ENCODE measurements at regions of chr2 and their contacts with region 1.

Region 1: DNA sequence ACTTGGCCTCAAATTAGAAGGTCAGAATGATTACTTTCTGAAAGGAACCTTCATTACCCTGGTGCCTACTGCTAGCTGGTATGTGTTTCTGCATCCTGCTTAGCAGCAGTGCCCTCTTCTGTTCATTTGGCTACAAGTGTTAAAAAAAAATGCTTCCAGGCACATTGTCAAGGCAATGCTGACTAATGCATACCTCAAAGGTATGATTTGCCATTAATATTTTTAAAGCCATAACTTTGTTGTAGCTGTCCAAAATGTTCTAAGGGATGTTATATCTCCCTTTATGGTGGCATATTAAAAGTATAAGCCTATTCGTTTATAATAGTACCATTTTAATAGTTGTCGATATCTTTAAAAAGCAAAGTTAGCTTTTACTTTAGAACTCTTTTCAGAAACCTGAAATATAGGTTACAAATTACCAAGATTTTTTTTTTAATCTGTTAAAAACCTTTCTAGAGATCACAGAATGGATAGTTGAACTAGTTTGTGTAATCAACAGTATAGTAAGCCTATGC is 52.0 kb upstream of the FAM171B start:
- DNase-seq: peak in 1 of 2 donors; percentile 67
- ATAC-seq: peak; percentile 52 to 72 (median 64)
- H3K4me3 ChIP-seq: no peak overlapping the region
- H3K4me3 Mint-ChIP-seq: no peak overlapping the region
- H3K27ac ChIP-seq: no peak overlapping the region
- H3K27ac Mint-ChIP-seq: no peak overlapping the region
- H3K4me1 ChIP-seq: no peaks in the 10 kb centered on the region
- H3K4me1 Mint-ChIP-seq: peaks cover 0 to 4% of the 10 kb centered on the region in 2 donors
- H3K27me3 ChIP-seq: no peaks in the 10 kb centered on the region
- H3K27me3 Mint-ChIP-seq: no peaks in the 10 kb centered on the region
- CTCF ChIP-seq: peak; percentile 57

Region 2: GRCh38 chr2:186503848-186504606 is 137.8 kb before region 1 on chr2:
- intact Hi-C with region 1: loop called (anchors 1 kb)
- DNase-seq: peak in 1 of 2 donors; percentile 47
- ATAC-seq: peak; percentile 53 to 69 (median 57)
- H3K4me3 ChIP-seq: no peak overlapping the region
- H3K4me3 Mint-ChIP-seq: no peak overlapping the region
- H3K27ac ChIP-seq: no peak overlapping the region
- H3K27ac Mint-ChIP-seq: peak overlapping the region; percentile 11 to 17
- H3K4me1 ChIP-seq: no peaks in the 10 kb centered on the region
- H3K4me1 Mint-ChIP-seq: peaks cover 15 to 16% of the 10 kb centered on the region in 2 donors
- H3K27me3 ChIP-seq: no peaks in the 10 kb centered on the region
- H3K27me3 Mint-ChIP-seq: no peaks in the 10 kb centered on the region
- CTCF ChIP-seq: peak; percentile 73

Region 3: GRCh38 chr2:186827411-186827810 is 185.5 kb after region 1 on chr2:
- intact Hi-C with region 1: no loop called
- DNase-seq: no peak
- ATAC-seq: no peak
- H3K4me3 ChIP-seq: no peak overlapping the region
- H3K4me3 Mint-ChIP-seq: no peak overlapping the region
- H3K27ac ChIP-seq: no peak overlapping the region
- H3K27ac Mint-ChIP-seq: no peak overlapping the region
- H3K4me1 ChIP-seq: no peaks in the 10 kb centered on the region
- H3K4me1 Mint-ChIP-seq: no peaks in the 10 kb centered on the region
- H3K27me3 ChIP-seq: no peaks in the 10 kb centered on the region
- H3K27me3 Mint-ChIP-seq: no peaks in the 10 kb centered on the region
- CTCF ChIP-seq: no peak

Measured in natural killer cell (primary cell).